MCF 10A (cell line): ENCODE measurements at regions of chr10 and their contacts with region 1.

Region 1: DNA sequence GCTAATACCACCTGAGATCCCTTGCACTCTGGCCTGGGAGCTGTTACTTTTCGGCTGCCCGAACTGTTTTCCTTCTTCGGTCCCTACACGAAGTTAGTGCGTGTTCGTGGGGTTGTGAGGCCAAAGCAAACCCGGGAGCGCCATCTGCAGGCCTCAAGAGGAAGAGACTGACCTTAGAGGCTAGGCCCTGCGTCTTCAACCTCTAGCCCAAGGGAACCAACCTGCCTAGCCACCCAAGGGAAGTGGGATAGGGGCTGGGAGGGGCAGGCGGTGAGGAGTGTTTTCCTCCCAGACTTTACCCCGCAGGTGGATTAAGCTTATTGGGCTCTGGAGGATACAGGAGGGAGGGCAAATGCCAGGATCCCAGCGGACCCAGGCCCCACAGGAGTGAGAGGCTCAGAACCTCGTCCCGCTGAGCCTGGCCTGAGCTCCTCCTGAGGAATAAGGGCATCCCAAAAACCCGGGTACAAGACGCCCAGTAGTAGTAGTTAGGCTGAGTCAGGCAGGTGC is 1.7 kb upstream of the PAX2 start:
- DNase-seq: peak; percentile 70
- H3K4me3 Mint-ChIP-seq: no peak overlapping the region
- H3K27ac Mint-ChIP-seq: no peak overlapping the region
- H3K4me1 Mint-ChIP-seq: peaks cover 7% of the 10 kb centered on the region
- H3K27me3 Mint-ChIP-seq: peaks cover 94% of the 10 kb centered on the region
- CTCF ChIP-seq: peak; percentile 76

Region 2: DNA sequence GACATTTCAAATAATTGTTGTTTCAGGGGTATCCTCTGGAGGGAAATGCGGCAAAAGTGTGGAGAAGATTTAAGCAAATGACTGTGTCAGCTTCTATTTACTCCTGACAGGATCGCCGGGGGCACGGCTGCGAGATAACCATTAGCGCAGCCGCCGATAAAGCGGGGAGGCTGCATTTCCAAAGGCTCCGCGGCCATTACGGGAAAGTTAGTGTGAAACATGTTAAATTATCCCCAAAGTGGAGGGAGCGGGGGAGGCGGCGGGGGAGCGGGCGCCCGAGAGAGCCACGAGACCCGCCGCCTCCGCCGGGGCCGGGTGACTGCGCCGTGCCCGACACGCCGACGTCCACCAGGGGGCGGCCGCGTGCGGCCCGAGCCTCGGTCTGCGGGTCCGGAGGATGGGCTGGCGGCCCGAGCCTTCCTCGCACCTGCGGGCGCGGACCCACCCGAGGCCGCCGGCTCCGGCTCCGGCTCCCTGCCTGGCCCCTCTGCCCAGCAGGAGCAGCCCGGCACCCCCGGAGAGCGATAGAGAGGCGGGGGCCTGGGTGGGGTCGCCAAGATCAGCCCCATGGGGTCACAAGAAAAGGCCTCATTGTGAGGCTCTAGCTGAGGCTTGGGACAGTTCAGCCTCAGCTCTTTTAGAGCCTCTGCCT is 72.7 kb before region 1 on chr10:
- CTCF ChIA-PET with region 1: interaction called, 6 read pairs
- POLR2A ChIA-PET with region 1: no interaction called
- intact Hi-C with region 1: loop called (anchors 10 kb)
- DNase-seq: peak; percentile 16
- H3K4me3 Mint-ChIP-seq: no peak overlapping the region
- H3K27ac Mint-ChIP-seq: no peak overlapping the region
- H3K4me1 Mint-ChIP-seq: no peaks in the 10 kb centered on the region
- H3K27me3 Mint-ChIP-seq: peaks cover 62% of the 10 kb centered on the region
- CTCF ChIP-seq: peak; percentile 80

Region 3: GRCh38 chr10:100775386-100775785 is 31.7 kb after region 1 on chr10:
- CTCF ChIA-PET with region 1: no interaction called
- POLR2A ChIA-PET with region 1: no interaction called
- intact Hi-C with region 1: no loop called
- DNase-seq: peak; percentile 54
- H3K4me3 Mint-ChIP-seq: no peak overlapping the region
- H3K27ac Mint-ChIP-seq: no peak overlapping the region
- H3K4me1 Mint-ChIP-seq: no peaks in the 10 kb centered on the region
- H3K27me3 Mint-ChIP-seq: peaks cover 49% of the 10 kb centered on the region
- CTCF ChIP-seq: no peak